Endothelial cell of umbilical vein (primary cell): ENCODE measurements at regions of chr20 and their contacts with region 1.

Region 1: GRCh38 chr20:23420943-23421931 is at the start of gene NAPB:
- DNase-seq: peak; percentile 93
- H3K4me3 ChIP-seq: peak within 1 kb of the TSS; percentile 86 to 90 (median 88)
- H3K27ac ChIP-seq: peak within 1 kb of the TSS; percentile 22
- H3K4me1 ChIP-seq: peaks cover 8% of the 10 kb centered on the region
- H3K27me3 ChIP-seq: peaks cover 4 to 7% of the 10 kb centered on the region in 2 experiments
- CTCF ChIP-seq: peak; percentile 14 to 51
- POLR2A ChIP-seq: peak; percentile 91
- total RNA-seq, gene NAPB: 8.1 and 10.1 TPM in 2 replicates

Region 2: GRCh38 chr20:23147964-23148730 is 273.1 kb before region 1 on chr20:
- CTCF ChIA-PET with region 1: no interaction called
- POLR2A ChIA-PET with region 1: no interaction called
- dilution Hi-C with region 1: no loop called
- intact Hi-C with region 1: loop called (anchors 5 kb)
- DNase-seq: peak; percentile 84
- H3K4me3 ChIP-seq: no peak overlapping the region
- H3K27ac ChIP-seq: peak overlapping the region; percentile 88
- H3K4me1 ChIP-seq: peaks cover 85% of the 10 kb centered on the region
- H3K27me3 ChIP-seq: no peaks in the 10 kb centered on the region
- CTCF ChIP-seq: no peak
- POLR2A ChIP-seq: no peak

Region 3: DNA sequence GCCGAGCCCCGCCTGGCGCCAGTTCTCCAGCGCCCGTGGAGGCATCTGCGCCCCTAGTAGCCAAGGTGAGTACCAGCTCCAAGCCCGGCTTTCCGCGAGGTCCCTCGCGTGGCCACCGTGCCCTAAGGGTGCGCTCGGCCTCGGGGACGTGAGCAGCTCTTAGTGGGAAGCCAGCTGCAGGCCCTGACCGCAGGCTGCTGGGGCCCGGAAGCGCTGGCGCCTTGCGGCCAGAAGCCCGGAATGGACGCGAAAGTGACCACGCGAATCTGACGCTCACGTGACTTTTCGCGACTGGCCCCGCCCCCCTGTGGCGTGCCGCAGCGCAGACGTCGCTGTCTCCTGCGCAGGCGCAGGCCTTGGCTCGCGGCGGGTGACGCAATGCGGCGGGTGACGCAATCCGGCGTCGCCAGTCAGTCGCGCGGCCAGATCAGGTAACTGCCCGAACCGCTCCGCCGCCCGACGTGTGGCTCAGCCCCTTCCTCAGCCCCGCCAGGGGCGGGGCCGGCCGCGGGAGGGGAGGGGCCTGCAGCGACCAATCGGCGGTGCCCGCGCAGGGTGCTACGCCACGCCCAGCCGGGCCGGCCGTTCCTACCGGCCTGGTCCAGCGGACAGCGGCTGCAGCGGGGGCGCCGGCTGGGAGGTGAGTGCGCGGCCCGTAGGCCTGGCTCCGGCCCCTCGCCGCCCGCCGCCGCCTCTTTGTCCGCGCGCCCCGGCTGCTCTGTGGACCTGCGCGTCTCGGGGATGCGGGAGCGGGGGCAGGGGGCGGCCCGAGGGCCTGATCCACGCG is 59.4 kb before region 1 on chr20 and contains the start of gene GZF1:
- CTCF ChIA-PET with region 1: interaction called, 15 read pairs
- POLR2A ChIA-PET with region 1: interaction called, 3 read pairs
- dilution Hi-C with region 1: no loop called
- intact Hi-C with region 1: loop called (anchors 1 kb)
- DNase-seq: peak; percentile 100
- H3K4me3 ChIP-seq: peak within 1 kb of the TSS; percentile 65 to 73 (median 67)
- H3K27ac ChIP-seq: peak within 1 kb of the TSS; percentile 90
- H3K4me1 ChIP-seq: peaks cover 40% of the 10 kb centered on the region
- H3K27me3 ChIP-seq: no peaks in the 10 kb centered on the region
- CTCF ChIP-seq: no peak
- POLR2A ChIP-seq: peak; percentile 93
- total RNA-seq, gene GZF1: 10.0 and 12.5 TPM in 2 replicates

Region 4: GRCh38 chr20:23441850-23442313 is 20.6 kb after region 1 on chr20:
- CTCF ChIA-PET with region 1: interaction called, 31 read pairs
- POLR2A ChIA-PET with region 1: interaction called, 3 read pairs
- dilution Hi-C with region 1: no loop called
- intact Hi-C with region 1: no loop called
- DNase-seq: peak; percentile 77
- H3K4me3 ChIP-seq: no peak overlapping the region
- H3K27ac ChIP-seq: no peak overlapping the region
- H3K4me1 ChIP-seq: no peaks in the 10 kb centered on the region
- H3K27me3 ChIP-seq: no peaks in the 10 kb centered on the region
- CTCF ChIP-seq: peak; percentile 80 to 90
- POLR2A ChIP-seq: no peak

Region 5: GRCh38 chr20:25195014-25195961 is 1774.1 kb after region 1 on chr20 and contains the start of gene ENTPD6:
- CTCF ChIA-PET with region 1: no interaction called
- POLR2A ChIA-PET with region 1: interaction called, 12 read pairs
- dilution Hi-C with region 1: no loop called
- intact Hi-C with region 1: no loop called
- DNase-seq: peak; percentile 91
- H3K4me3 ChIP-seq: peak within 1 kb of the TSS; percentile 60 to 89 (median 79)
- H3K27ac ChIP-seq: peak within 1 kb of the TSS; percentile 46
- H3K4me1 ChIP-seq: peaks cover 5% of the 10 kb centered on the region
- H3K27me3 ChIP-seq: peaks cover 6 to 13% of the 10 kb centered on the region in 2 experiments
- CTCF ChIP-seq: peak in 1 of 2 donors; percentile 30
- POLR2A ChIP-seq: peak; percentile 89
- total RNA-seq, gene ENTPD6: 51.2 and 52.2 TPM in 2 replicates